ENCODE measurements at regions of chr7 and their contacts with region 1.

Region 1: DNA sequence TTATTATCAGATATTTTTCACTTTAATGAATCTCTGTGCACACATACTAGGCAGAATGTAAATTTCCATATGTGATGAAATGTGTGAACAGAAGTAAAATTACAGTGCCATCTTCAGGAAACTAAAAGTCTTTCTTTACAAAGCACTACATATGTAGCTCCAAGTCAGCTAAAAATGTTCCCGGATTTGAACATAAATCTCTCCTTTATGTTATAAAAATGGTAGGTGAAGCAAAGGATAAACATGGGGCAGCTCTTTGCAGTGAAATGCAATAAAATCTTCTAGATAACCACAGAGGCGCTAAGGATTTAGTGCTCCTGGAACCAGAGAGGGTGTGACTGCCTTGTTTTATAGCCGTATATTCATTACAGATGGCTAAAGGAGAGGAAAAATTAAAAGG is 104.9 kb upstream of the C7orf33 start:
- DNase-seq: no peak
- H3K4me3 Mint-ChIP-seq: no peak overlapping the region
- H3K27ac Mint-ChIP-seq: no peak overlapping the region
- H3K4me1 Mint-ChIP-seq: peaks cover 4% of the 10 kb centered on the region
- H3K27me3 Mint-ChIP-seq: peaks cover 8% of the 10 kb centered on the region

Region 2: GRCh38 chr7:148262721-148263229 is 222.8 kb before region 1 on chr7:
- intact Hi-C with region 1: loop called (anchors 10 kb)
- DNase-seq: peak; percentile 87
- H3K4me3 Mint-ChIP-seq: peak overlapping the region; percentile 22
- H3K27ac Mint-ChIP-seq: no peak overlapping the region
- H3K4me1 Mint-ChIP-seq: peaks cover 7% of the 10 kb centered on the region
- H3K27me3 Mint-ChIP-seq: peaks cover 5% of the 10 kb centered on the region